Breast epithelium (tissue), 4 donors: ENCODE measurements at regions of chr11 and their contacts with region 1.

Region 1: DNA sequence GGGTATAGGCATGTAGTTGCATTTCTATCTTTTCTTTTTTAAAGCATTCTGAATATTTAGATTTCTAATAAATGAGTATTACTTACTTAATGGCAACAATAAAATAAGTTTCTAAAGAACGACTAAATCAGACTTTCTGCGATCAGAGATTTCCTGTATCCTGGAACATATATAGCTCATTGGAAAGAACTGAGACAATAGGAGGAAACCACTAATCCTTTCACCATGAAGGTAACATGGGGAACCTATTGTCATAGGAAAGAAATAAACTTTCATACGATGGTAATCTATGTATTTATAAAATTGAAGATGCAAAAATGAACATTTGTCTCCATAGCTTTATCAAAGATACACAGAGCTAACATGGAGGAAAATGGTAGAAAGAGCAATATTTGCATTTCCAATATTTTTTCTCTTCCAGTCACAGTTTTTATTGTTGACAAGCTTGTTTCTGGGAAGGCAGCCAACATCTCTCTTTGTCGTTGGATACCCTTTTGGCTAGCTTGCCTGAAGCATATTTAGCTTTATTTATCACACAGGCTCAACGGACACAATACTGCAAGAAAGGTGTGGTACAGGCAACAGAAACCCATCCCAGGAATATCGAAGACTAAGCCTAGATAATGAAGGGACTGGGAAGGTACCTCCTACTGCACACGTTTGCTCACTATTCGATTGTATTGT is 293.3 kb upstream of the MPPED2 start:
- DNase-seq: no peak
- H3K4me3 ChIP-seq: no peak overlapping the region
- H3K27ac ChIP-seq: no peak overlapping the region
- H3K4me1 ChIP-seq: no peaks in the 10 kb centered on the region
- H3K27me3 ChIP-seq: no peaks in the 10 kb centered on the region
- CTCF ChIP-seq: no peak
- POLR2A ChIP-seq: no peak

Region 2: DNA sequence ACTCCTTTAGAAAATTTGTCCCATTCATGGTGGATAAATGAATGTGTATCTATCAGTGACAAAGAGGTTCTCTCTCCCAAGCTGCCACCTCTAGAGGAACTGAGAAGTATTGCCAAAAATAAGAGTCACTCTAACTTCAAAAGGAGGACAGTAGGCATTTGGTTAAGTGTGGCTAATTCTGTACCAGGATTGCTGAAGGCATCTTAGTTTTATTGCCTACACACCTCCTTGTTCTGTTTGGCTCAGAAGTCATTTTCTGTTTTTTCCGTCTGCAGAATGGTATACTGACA is 104.3 kb before region 1 on chr11:
- intact Hi-C with region 1: no loop called
- DNase-seq: no peak
- H3K4me3 ChIP-seq: no peak overlapping the region
- H3K27ac ChIP-seq: peak overlapping the region in 1 of 2 donors; percentile 11
- H3K4me1 ChIP-seq: no peaks in the 10 kb centered on the region
- H3K27me3 ChIP-seq: no peaks in the 10 kb centered on the region
- CTCF ChIP-seq: no peak
- POLR2A ChIP-seq: no peak

Region 3: DNA sequence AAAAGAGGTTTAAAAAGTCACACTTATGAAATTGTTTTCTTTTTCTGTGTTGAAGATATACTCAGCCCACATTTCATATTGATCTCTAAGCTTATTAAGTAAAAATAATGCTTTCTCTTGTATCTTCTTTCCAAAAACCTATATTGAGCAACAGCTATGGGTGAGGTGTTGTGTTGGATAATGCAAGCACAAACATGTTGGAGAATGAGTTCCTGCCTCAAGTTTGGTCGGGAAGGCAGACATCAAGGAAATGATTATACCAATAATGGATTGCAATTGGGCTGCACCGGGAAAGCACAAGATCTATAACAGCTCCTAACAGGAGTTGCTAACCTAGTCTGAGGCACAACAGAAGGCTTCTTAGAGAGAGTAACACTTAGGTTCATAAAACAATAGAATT is 15.6 kb after region 1 on chr11:
- intact Hi-C with region 1: loop called (anchors 1 kb)
- DNase-seq: no peak
- H3K4me3 ChIP-seq: no peak overlapping the region
- H3K27ac ChIP-seq: no peak overlapping the region
- H3K4me1 ChIP-seq: no peaks in the 10 kb centered on the region
- H3K27me3 ChIP-seq: no peaks in the 10 kb centered on the region
- CTCF ChIP-seq: no peak
- POLR2A ChIP-seq: no peak

Region 4: GRCh38 chr11:31060880-31061279 is 181.4 kb after region 1 on chr11:
- intact Hi-C with region 1: no loop called
- DNase-seq: no peak
- H3K4me3 ChIP-seq: no peak overlapping the region
- H3K27ac ChIP-seq: no peak overlapping the region
- H3K4me1 ChIP-seq: no peaks in the 10 kb centered on the region
- H3K27me3 ChIP-seq: no peaks in the 10 kb centered on the region
- CTCF ChIP-seq: no peak
- POLR2A ChIP-seq: no peak